ENCODE measurements at regions of chr18 and their contacts with region 1.

Region 1: DNA sequence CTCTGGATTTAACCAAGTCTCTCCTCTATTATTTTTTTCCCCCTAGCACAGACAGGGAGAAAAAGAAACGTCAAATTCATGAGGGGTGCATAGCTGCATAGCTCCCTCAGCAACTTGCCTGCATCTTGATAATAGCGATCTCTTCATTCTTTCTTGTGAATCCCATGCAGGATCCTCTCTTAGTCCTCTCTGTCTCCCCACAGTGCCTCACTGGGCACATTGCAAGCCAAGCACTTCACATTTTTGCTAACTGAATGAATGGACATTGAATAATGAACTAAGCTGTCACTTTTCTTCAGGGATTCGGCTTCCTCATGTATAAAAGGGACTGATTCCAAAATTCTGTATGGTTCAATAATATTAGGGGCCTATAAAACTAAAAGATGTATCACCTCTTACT is 2.9 kb upstream of the EPB41L3 start:
- DNase-seq: no peak
- H3K4me3 Mint-ChIP-seq: no peak overlapping the region
- H3K27ac Mint-ChIP-seq: no peak overlapping the region
- H3K4me1 Mint-ChIP-seq: peaks cover 2% of the 10 kb centered on the region
- H3K27me3 Mint-ChIP-seq: peaks cover 32% of the 10 kb centered on the region

Region 2: GRCh38 chr18:4468511-4468910 is 1078.1 kb before region 1 on chr18:
- intact Hi-C with region 1: no loop called
- DNase-seq: no peak
- H3K4me3 Mint-ChIP-seq: no peak overlapping the region
- H3K27ac Mint-ChIP-seq: no peak overlapping the region
- H3K4me1 Mint-ChIP-seq: no peaks in the 10 kb centered on the region
- H3K27me3 Mint-ChIP-seq: no peaks in the 10 kb centered on the region

Region 3: GRCh38 chr18:5574843-5575242 is 28.2 kb after region 1 on chr18:
- intact Hi-C with region 1: no loop called
- DNase-seq: no peak
- H3K4me3 Mint-ChIP-seq: no peak overlapping the region
- H3K27ac Mint-ChIP-seq: no peak overlapping the region
- H3K4me1 Mint-ChIP-seq: no peaks in the 10 kb centered on the region
- H3K27me3 Mint-ChIP-seq: no peaks in the 10 kb centered on the region

Region 4: GRCh38 chr18:5840547-5840946 is 293.9 kb after region 1 on chr18:
- intact Hi-C with region 1: no loop called
- DNase-seq: no peak
- H3K4me3 Mint-ChIP-seq: no peak overlapping the region
- H3K27ac Mint-ChIP-seq: no peak overlapping the region
- H3K4me1 Mint-ChIP-seq: no peaks in the 10 kb centered on the region
- H3K27me3 Mint-ChIP-seq: no peaks in the 10 kb centered on the region

Region 5: GRCh38 chr18:5890331-5891183 is 343.9 kb after region 1 on chr18:
- intact Hi-C with region 1: loop called (anchors 10 kb)
- DNase-seq: no peak
- H3K4me3 Mint-ChIP-seq: no peak overlapping the region
- H3K27ac Mint-ChIP-seq: no peak overlapping the region
- H3K4me1 Mint-ChIP-seq: peaks cover 2% of the 10 kb centered on the region
- H3K27me3 Mint-ChIP-seq: peaks cover 58% of the 10 kb centered on the region

Region 6: GRCh38 chr18:6624271-6624660 is 1077.6 kb after region 1 on chr18:
- intact Hi-C with region 1: no loop called
- DNase-seq: no peak
- H3K4me3 Mint-ChIP-seq: no peak overlapping the region
- H3K27ac Mint-ChIP-seq: no peak overlapping the region
- H3K4me1 Mint-ChIP-seq: no peaks in the 10 kb centered on the region
- H3K27me3 Mint-ChIP-seq: no peaks in the 10 kb centered on the region

Measured in activated T-helper 2 cell treated with anti-CD3 and anti-CD28 coated beads, Interferon-gamma antibody, Interleukin-2, Interleukin-4, amounts not matched to agents 10 μg/mL and 5 μg/mL and 100 μg/mL, durations not matched to agents 14 hours and 24 hours and 36 hours (primary cell).